GM10248 (cell line): ENCODE measurements at regions of chr17 and their contacts with region 1.

Region 1: DNA sequence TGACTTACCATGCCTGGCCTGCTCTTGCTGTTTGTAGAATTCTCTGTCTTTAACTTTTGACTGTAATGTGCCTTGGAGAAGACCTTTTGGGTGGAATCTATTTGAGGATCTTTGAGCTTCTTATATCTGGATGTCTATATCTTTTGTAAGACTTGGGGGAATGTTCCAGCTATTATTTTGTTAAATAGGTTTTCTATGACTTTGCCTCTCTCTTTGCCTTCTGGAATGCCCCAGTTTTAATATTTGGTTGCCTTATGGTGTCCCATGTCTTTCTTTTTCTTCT is 10.3 kb upstream of the PHB1 start:
- DNase-seq: no peak
- CTCF ChIP-seq: no peak

Region 2: DNA sequence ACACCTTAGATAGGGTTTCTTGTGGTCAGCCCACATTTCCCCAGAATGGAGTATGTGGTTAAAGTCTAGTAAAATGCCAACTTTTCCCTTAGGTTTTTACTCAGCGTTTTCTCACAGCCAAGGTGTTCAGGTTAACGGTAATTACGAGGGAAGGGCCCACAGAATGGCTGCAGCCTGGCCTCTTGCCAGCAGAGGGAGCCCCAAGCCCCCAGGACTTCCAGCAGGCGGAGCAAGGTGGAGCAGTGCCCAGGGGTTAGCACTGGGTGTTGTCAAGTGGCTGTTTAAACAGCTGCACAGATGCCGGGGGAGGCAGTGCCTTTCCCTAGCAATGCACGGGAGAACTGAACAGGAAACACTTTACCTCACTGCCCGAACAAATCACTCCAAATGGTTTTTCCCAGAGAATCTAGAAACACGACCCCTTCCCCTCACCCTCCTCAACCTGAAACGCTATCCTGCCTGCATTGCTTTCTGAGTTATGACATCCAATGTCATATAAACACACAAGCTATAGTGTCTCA is 16.9 kb before region 1 on chr17:
- CTCF ChIA-PET with region 1: interaction called, 12 read pairs
- POLR2A ChIA-PET with region 1: no interaction called
- DNase-seq: peak; percentile 88
- CTCF ChIP-seq: peak; percentile 96

Region 3: GRCh38 chr17:49935526-49936210 is 510.7 kb after region 1 on chr17:
- CTCF ChIA-PET with region 1: no interaction called
- POLR2A ChIA-PET with region 1: interaction called, 10 read pairs
- DNase-seq: no peak
- CTCF ChIP-seq: no peak